Lower leg skin (tissue), 4 donors: ENCODE measurements at regions of chrX and their contacts with region 1.

Region 1: DNA sequence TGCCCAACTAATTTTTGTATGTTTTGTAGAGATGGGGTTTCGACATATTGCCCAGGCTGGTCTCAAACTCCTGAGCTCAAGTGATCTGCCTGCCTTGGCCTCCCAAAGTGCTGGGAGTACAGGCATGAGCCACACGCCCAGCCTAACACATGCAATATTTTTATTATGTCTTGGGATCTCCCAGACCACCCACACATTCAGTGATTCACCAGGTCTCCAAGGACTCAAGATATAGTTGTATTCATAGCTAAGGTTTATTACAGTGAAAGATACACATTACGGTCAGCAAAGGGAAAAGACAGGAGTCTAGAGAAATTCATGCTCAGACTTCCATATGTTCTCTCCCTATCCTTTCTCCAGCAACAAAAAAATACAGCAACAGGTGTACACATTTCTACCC is 25.5 kb upstream of the FAM120C start:
- DNase-seq: no peak
- H3K4me3 ChIP-seq: no peak overlapping the region
- CTCF ChIP-seq: no peak
- POLR2A ChIP-seq: no peak

Region 2: GRCh38 chrX:54230435-54231148 is 22.1 kb after region 1 on chrX:
- intact Hi-C with region 1: loop called (anchors 1 kb)
- DNase-seq: no peak
- H3K4me3 ChIP-seq: no peak overlapping the region
- CTCF ChIP-seq: no peak
- POLR2A ChIP-seq: no peak

Region 3: GRCh38 chrX:54659547-54659946 is 451.0 kb after region 1 on chrX:
- intact Hi-C with region 1: no loop called
- DNase-seq: no peak
- H3K4me3 ChIP-seq: no peak overlapping the region
- CTCF ChIP-seq: no peak
- POLR2A ChIP-seq: no peak